Colonic mucosa (tissue), 4 donors: ENCODE measurements at regions of chr16 and their contacts with region 1.

Region 1: DNA sequence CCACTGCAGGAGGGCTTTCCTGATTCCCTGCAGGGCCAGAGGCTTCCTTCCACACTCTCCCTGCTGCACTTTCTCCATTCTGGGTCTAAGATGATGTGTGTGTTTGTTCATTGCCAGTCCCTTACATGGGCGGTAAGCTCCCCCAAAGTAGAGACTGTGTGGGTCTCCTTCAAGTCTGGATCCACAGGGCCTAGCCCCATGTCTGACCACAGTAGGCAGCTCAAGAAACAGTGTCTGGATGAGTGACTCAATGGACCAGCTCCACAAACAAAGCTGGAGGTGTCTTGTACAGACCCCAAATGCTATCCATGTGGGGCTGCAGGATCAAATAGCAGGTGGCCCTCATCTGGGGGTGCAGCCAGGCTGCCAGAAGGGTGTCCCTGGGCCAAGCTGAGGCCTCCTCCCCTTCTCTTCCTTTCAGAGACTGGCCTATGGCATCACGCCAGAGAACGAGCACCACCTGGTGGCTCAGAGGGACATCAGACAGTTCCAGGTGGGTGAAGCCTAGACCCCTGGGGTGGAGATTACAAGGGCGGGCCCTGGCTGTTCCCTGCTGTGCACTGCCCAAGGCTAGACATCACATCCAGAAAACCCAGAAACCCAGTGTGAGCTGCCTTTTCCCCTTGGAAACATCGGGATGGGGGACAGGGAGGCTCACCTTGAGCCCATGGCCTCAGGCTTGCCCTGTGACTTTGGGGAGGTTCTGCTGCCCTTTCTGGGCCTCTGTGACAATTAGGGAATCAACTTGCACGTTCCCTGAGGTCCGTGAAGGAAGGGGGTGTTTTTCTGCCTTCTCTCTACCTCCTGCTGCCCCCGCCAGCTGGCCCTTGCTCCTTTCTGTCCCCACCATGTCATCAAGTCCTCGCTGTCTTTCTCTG is 45.9 kb downstream of the SLC6A2 start:
- DNase-seq: peak; percentile 52
- H3K4me3 ChIP-seq: no peak overlapping the region
- H3K27ac ChIP-seq: no peak overlapping the region
- H3K4me1 ChIP-seq: no peaks in the 10 kb centered on the region
- H3K27me3 ChIP-seq: no peaks in the 10 kb centered on the region
- CTCF ChIP-seq: peak; percentile 39

Region 2: GRCh38 chr16:55494994-55495421 is 206.7 kb before region 1 on chr16:
- intact Hi-C with region 1: loop called (anchors 10 kb)
- DNase-seq: peak; percentile 61
- H3K4me3 ChIP-seq: no peak overlapping the region
- H3K27ac ChIP-seq: no peak overlapping the region
- H3K4me1 ChIP-seq: no peaks in the 10 kb centered on the region
- H3K27me3 ChIP-seq: no peaks in the 10 kb centered on the region
- CTCF ChIP-seq: no peak

Region 3: DNA sequence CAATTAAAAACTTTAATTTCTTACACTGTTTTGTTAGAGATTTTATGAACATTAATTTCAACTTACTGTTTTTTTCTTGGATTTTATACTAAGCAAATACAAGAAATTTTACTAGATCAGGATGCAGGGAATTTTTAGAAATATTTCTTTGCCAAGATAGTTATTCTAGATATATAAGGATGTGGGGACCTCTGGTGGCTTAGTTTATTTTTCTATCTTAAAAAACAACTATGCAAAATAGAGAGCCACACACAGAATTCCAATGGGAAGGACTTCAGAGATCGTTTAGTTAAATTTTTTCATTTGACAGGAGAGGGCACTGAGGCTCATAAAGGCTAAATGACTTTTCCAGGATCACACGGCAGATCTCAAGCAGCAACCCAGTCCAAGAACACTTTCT is 158.2 kb before region 1 on chr16:
- intact Hi-C with region 1: loop called (anchors 5 kb)
- DNase-seq: no peak
- H3K4me3 ChIP-seq: no peak overlapping the region
- H3K27ac ChIP-seq: no peak overlapping the region
- H3K4me1 ChIP-seq: no peaks in the 10 kb centered on the region
- H3K27me3 ChIP-seq: no peaks in the 10 kb centered on the region
- CTCF ChIP-seq: no peak

Region 4: DNA sequence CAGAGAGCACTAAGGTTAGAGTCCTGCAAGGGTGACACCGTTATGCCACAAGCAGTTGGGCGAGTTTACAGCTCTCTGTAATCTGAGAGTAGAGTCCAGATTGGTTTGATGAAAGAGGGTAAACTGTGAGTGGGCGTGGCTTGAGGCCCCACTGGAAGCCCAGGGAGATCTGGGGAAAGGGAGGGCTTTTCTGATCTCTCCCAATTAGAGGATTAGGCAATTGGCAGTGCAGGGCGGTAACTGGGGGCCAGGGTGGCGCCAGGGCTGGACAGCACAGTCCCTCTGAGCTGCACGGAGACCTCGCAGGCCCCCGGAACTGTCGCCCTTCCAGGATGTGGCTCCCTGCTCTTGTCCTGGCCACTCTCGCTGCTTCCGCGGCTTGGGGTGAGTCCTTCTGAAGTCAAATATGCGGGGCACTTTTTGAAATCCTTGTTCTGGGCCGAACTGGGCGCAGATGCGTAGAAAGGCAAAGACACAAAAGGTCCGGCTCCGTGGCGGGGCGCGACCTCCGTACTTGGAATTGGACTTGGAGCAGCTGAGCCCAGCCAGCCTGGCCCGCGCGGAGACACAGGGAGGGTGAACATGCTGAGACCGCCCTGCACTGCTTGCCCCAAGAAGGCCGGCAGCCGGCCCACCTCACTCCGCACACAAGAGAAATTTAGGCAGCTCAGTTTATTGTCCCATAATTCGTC is 58.8 kb after region 1 on chr16:
- intact Hi-C with region 1: no loop called
- DNase-seq: peak; percentile 32
- H3K4me3 ChIP-seq: no peak overlapping the region
- H3K27ac ChIP-seq: no peak overlapping the region
- H3K4me1 ChIP-seq: no peaks in the 10 kb centered on the region
- H3K27me3 ChIP-seq: no peaks in the 10 kb centered on the region
- CTCF ChIP-seq: no peak